Heart left ventricle (tissue), 16 donors: ENCODE measurements at regions of chrX and their contacts with region 1.

Region 1: GRCh38 chrX:135931644-135932487 is 38.4 kb downstream of the SAGE1 start:
- DNase-seq: peak in 3 of 5 donors; percentile 13 to 47 (median 23)
- ATAC-seq: peak in 3 of 4 donors; percentile 42 to 68 (median 66)
- H3K4me3 ChIP-seq: no peak overlapping the region
- H3K27ac ChIP-seq: no peak overlapping the region
- H3K4me1 ChIP-seq: no peaks in the 10 kb centered on the region
- H3K27me3 ChIP-seq: peaks cover 0 to 3% (median 0%) of the 10 kb centered on the region in 9 donors
- CTCF ChIP-seq: peak; percentile 48 to 75 (median 62)
- POLR2A ChIP-seq: no peak

Region 2: GRCh38 chrX:135185795-135186443 is 745.9 kb before region 1 on chrX:
- intact Hi-C with region 1: loop called in 1 of 10 experiments (anchors 5 kb)
- DNase-seq: peak in 1 of 5 donors; percentile 8
- ATAC-seq: peak; percentile 58 to 87 (median 82)
- H3K4me3 ChIP-seq: no peak overlapping the region
- H3K27ac ChIP-seq: no peak overlapping the region
- H3K4me1 ChIP-seq: no peaks in the 10 kb centered on the region
- H3K27me3 ChIP-seq: peaks cover 0 to 20% (median 0%) of the 10 kb centered on the region in 9 donors
- CTCF ChIP-seq: peak in 11 of 12 donors; percentile 7 to 58 (median 39)
- POLR2A ChIP-seq: no peak

Region 3: GRCh38 chrX:135484641-135485289 is 447.1 kb before region 1 on chrX:
- intact Hi-C with region 1: loop called in 4 of 10 experiments (anchors 5 to 10 kb)
- DNase-seq: peak in 2 of 5 donors; percentile 5 to 14
- ATAC-seq: no peak
- H3K4me3 ChIP-seq: no peak overlapping the region
- H3K27ac ChIP-seq: no peak overlapping the region
- H3K4me1 ChIP-seq: no peaks in the 10 kb centered on the region
- H3K27me3 ChIP-seq: peaks cover 0 to 5% (median 0%) of the 10 kb centered on the region in 9 donors
- CTCF ChIP-seq: peak; percentile 32 to 65 (median 48)
- POLR2A ChIP-seq: no peak

Region 4: DNA sequence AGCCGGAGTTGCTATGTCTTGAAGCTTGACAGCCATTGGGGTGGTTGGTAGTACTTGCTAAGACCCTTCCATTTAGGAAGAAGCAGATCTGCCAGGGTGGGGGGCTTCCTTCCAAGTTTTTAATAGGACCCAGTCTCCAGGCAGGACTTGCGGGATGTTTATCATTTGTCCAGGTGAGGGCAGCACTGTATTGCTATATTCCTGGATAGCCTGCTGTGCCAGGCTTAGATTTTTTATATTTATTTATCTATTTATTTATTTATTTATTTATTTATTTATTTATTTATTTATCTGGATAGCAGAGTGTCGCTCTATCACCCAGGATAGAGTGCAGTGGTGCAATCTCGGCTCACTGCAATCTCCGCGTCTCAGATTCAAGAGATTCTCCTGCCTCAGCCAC is 305.9 kb before region 1 on chrX:
- intact Hi-C with region 1: loop called in 3 of 10 experiments (anchors 2 to 10 kb)
- DNase-seq: no peak
- ATAC-seq: no peak
- H3K4me3 ChIP-seq: no peak overlapping the region
- H3K27ac ChIP-seq: no peak overlapping the region
- H3K4me1 ChIP-seq: no peaks in the 10 kb centered on the region
- H3K27me3 ChIP-seq: no peaks in the 10 kb centered on the region
- CTCF ChIP-seq: peak in 4 of 12 donors; percentile 13 to 29 (median 18)
- POLR2A ChIP-seq: no peak

Region 5: DNA sequence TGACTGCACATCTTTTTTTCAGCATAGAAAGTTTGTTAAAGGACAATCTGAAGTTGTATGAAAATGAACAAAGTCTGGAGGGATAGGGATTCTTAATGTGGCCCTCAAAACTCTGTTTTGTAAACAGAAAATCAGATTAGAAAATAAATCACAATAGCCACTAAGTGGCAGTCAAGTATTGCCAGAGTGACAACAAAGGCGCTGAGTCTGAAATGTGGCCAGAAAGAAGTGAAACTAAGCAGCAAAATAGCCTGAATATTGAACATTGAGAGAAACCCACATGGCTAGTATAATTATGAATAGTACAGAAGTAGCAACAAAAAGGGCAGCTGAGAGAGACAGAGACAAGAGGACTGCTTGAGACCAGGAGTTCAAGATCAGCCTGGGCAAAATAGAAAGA is 299.5 kb before region 1 on chrX:
- intact Hi-C with region 1: loop called in 3 of 10 experiments (anchors 2 to 10 kb)
- DNase-seq: no peak
- ATAC-seq: no peak
- H3K4me3 ChIP-seq: no peak overlapping the region
- H3K27ac ChIP-seq: no peak overlapping the region
- H3K4me1 ChIP-seq: no peaks in the 10 kb centered on the region
- H3K27me3 ChIP-seq: peaks cover 0 to 23% (median 0%) of the 10 kb centered on the region in 9 donors
- CTCF ChIP-seq: no peak
- POLR2A ChIP-seq: no peak